Esophagus muscularis mucosa (tissue), 4 donors: ENCODE measurements at regions of chr4 and their contacts with region 1.

Region 1: DNA sequence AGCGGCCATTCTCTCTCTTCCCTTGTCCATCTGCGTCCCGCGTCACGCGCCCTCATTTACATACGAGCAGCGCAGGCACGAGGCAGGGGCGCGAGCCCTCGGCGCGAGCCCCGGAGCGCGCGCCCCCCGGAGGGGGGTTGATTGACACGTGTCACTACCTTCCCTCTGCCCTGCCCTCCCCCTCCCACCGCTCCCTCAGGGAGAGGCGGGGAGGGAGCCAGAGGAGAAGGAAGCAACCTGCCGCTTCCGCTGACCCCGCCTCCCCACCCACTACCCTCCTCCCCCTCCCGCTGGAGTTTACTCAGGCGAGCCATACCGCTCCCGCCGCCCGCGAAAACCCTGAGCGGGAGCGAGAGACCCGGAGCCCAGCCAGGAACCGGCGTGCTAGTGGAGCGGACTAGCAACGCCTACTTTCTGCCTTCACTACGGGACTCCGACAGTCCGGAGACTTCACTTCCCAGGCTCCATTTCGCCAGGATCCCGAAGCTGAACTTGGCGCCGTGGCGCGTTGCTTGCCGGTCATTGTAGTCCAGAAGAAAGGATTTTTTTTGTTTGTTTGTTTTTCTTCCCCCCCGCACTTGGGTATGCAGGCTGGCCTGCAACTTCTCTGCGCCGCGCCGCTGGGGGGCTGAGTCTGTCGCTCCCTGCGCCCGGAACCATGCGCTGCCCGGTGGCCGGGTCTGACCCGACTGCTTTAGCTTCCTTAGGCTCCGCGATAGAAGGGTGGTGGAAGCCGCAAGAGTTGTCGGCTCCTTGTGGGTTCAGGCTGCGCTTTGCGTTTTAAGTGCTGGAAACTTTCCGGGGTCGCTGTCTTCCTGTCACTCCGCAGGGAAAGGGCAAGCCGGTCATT is at the start of gene LCORL:
- DNase-seq: peak; percentile 98
- H3K4me3 ChIP-seq: peak within 1 kb of the TSS; percentile 86 to 89 (median 88)
- H3K27ac ChIP-seq: peak within 1 kb of the TSS; percentile 93 to 98 (median 95)
- H3K4me1 ChIP-seq: peaks cover 10 to 23% (median 18%) of the 10 kb centered on the region in 4 donors
- H3K27me3 ChIP-seq: no peaks in the 10 kb centered on the region
- CTCF ChIP-seq: no peak
- EP300 ChIP-seq: no peak
- POLR2A ChIP-seq: no peak
- total RNA-seq, gene LCORL: 7.6 to 14.1 (median 11.5) TPM

Region 2: GRCh38 chr4:17810260-17811077 is 211.5 kb before region 1 on chr4 and contains the starts of genes DCAF16 and NCAPG:
- intact Hi-C with region 1: loop called (anchors 5 kb)
- DNase-seq: peak; percentile 100
- H3K4me3 ChIP-seq: peak within 1 kb of the TSS; percentile 72 to 91 (median 80)
- H3K27ac ChIP-seq: peak within 1 kb of the TSS; percentile 94 to 98 (median 97)
- H3K4me1 ChIP-seq: peaks cover 37 to 54% (median 48%) of the 10 kb centered on the region in 4 donors
- H3K27me3 ChIP-seq: no peaks in the 10 kb centered on the region
- CTCF ChIP-seq: no peak
- EP300 ChIP-seq: no peak
- POLR2A ChIP-seq: peak; percentile 92
- total RNA-seq, gene DCAF16: 23.4 to 28.7 (median 26.3) TPM
- total RNA-seq, gene NCAPG: 0.17 to 0.98 (median 0.71) TPM in 3 of 4 donors, not detected in the other